GM12878 (cell line): ENCODE measurements at regions of chr6 and their contacts with region 1.

Region 1: GRCh38 chr6:33276864-33277662 is at the start of gene B3GALT4:
- DNase-seq: peak; percentile 49
- ATAC-seq: peak; percentile 75
- H3K4me3 ChIP-seq: peak within 1 kb of the TSS; percentile 87
- H3K27ac ChIP-seq: peak within 1 kb of the TSS; percentile 86
- H3K4me1 ChIP-seq: peaks cover 22% of the 10 kb centered on the region
- H3K27me3 ChIP-seq: no peaks in the 10 kb centered on the region
- CTCF ChIP-seq: peak; percentile 34 to 60 (median 47); a peak in 4 of 6 replicates
- EP300 ChIP-seq: 0 out of 4 replicates have a peak, but pooled peaks of 1 of the 2 experiments have one; percentile 9
- POLR2A ChIP-seq: peak; percentile 92
- RAD21 ChIP-seq: no peak
- polyA plus RNA-seq, gene B3GALT4: 0.27 to 0.37 TPM

Region 2: GRCh38 chr6:33299237-33299944 is 22.3 kb after region 1 on chr6:
- CTCF ChIA-PET with region 1: interaction called, 30 read pairs
- POLR2A ChIA-PET with region 1: interaction called, 19 read pairs
- RAD21 ChIA-PET with region 1: interaction called, 14 read pairs
- SMC1A ChIA-PET with region 1: interaction called, 13 read pairs
- in situ Hi-C with region 1: no loop called
- intact Hi-C with region 1: loop called (anchors 1 kb)
- DNase-seq: peak; percentile 69
- ATAC-seq: peak; percentile 89
- H3K4me3 ChIP-seq: peak overlapping the region; percentile 100
- H3K27ac ChIP-seq: peak overlapping the region; percentile 86
- H3K4me1 ChIP-seq: peaks cover 11% of the 10 kb centered on the region
- H3K27me3 ChIP-seq: no peaks in the 10 kb centered on the region
- CTCF ChIP-seq: peak; percentile 58 to 72 (median 69)
- EP300 ChIP-seq: peak in 1 of 2 experiments; percentile 47; a peak in 1 of 4 replicates
- POLR2A ChIP-seq: peak; percentile 94
- RAD21 ChIP-seq: no peak

Region 3: GRCh38 chr6:33344701-33345697 is 67.9 kb after region 1 on chr6:
- CTCF ChIA-PET with region 1: interaction called, 22 read pairs
- POLR2A ChIA-PET with region 1: interaction called, 7 read pairs
- RAD21 ChIA-PET with region 1: interaction called, 14 read pairs
- SMC1A ChIA-PET with region 1: interaction called, 8 read pairs
- in situ Hi-C with region 1: no loop called
- intact Hi-C with region 1: loop called (anchors 2 kb)
- DNase-seq: peak; percentile 58
- ATAC-seq: peak; percentile 81
- H3K4me3 ChIP-seq: peak overlapping the region; percentile 46; the same call in 1 of the 2 replicates
- H3K27ac ChIP-seq: peak overlapping the region; percentile 41
- H3K4me1 ChIP-seq: peaks cover 15% of the 10 kb centered on the region
- H3K27me3 ChIP-seq: no peaks in the 10 kb centered on the region
- CTCF ChIP-seq: peak; percentile 48 to 60 (median 55); a peak in 5 of 6 replicates
- EP300 ChIP-seq: no peak
- POLR2A ChIP-seq: no peak
- RAD21 ChIP-seq: peak; percentile 63

Region 4: GRCh38 chr6:33391278-33391921 is 114.3 kb after region 1 on chr6 and contains the start of gene KIFC1:
- CTCF ChIA-PET with region 1: interaction called, 3 read pairs
- POLR2A ChIA-PET with region 1: interaction called, 6 read pairs
- RAD21 ChIA-PET with region 1: interaction called, 3 read pairs
- SMC1A ChIA-PET with region 1: interaction called, 3 read pairs
- in situ Hi-C with region 1: no loop called
- intact Hi-C with region 1: loop called (anchors 5 kb)
- DNase-seq: peak; percentile 99
- ATAC-seq: peak; percentile 97
- H3K4me3 ChIP-seq: peak within 1 kb of the TSS; percentile 74
- H3K27ac ChIP-seq: peak within 1 kb of the TSS; percentile 91
- H3K4me1 ChIP-seq: peaks cover 6% of the 10 kb centered on the region
- H3K27me3 ChIP-seq: no peaks in the 10 kb centered on the region
- CTCF ChIP-seq: peak; percentile 93 to 98 (median 98); a peak in 5 of 6 replicates
- EP300 ChIP-seq: 0 out of 4 replicates have a peak, but pooled peaks have one; percentile 13 to 18
- POLR2A ChIP-seq: peak; percentile 90
- RAD21 ChIP-seq: peak; percentile 47
- polyA plus RNA-seq, gene KIFC1: 1.8 to 2.9 TPM